ENCODE measurements at regions of chr1 and their contacts with region 1.

Region 1: DNA sequence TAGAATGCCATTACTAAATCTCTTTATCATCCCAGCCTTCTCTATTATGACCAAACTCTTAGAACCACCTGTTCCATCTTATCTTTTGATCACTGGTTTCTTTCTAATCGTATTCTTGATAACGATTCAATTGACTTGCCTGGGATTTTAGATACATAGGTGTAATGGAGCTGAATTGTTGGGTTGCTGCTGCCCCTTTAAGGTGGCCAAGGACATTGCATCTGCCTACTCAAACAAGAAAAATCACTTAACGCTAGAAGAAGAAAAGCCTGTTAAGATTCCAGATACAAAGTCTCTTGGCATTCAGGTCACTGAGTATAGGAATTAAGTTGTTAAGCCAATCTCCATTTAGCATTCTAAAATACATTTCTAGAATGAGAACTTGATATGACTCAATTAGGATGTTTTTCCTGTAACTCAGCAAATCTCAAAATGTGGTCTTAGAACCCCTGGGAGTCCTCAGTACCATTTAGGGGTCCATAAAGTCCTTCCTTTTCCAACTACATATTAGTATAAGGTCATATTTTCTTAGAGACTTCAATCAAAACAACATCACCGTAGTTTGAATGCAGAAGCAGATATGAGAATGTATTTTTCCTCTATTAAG is 12.4 kb downstream of the NEXN start:
- DNase-seq: peak in 1 of 2 experiments; percentile 21
- H3K4me3 ChIP-seq: no peak overlapping the region
- H3K27ac ChIP-seq: no peak overlapping the region
- H3K4me1 ChIP-seq: no peaks in the 10 kb centered on the region
- H3K27me3 ChIP-seq: no peaks in the 10 kb centered on the region
- CTCF ChIP-seq: peak in 2 of 3 experiments; percentile 69 to 74; a peak in 3 of 4 replicates
- EP300 ChIP-seq: no peak
- POLR2A ChIP-seq: no peak
- RAD21 ChIP-seq: peak; percentile 87 to 91

Region 2: DNA sequence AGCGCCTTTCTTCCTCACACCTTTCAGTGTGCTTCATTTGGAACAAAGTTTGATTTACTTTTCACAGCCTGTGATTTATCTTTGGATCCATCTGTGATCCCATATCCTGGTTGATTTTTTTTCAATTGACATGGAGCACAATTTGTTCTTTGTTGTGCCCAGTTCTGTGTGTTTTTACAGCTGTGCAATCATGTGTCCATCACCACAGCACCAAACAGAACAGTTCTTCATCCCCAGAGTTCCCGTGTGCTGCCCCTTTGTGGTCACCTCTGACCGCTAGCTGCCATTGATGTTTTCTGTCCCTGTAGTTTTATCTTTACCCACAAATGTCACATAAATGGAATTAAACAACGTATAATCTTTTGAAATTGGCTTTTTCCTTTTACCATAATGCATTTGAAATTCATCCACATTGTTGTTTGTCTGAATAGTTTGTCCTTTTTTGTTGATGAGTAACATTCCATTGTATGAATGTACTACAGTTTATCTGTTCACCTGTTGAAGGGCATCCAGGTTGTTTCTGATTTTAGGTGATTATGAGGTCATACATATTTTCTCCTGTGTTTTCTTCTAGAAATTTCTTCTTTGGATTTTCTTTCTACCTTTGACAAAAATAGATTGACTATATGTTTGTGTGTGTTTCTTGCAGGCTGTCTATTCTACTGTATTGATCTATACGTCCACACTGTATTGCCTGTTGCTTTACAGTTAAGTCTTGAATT is 103.9 kb before region 1 on chr1:
- CTCF ChIA-PET with region 1: no interaction called
- POLR2A ChIA-PET with region 1: no interaction called
- DNase-seq: no peak
- H3K4me3 ChIP-seq: no peak overlapping the region
- H3K27ac ChIP-seq: no peak overlapping the region
- H3K4me1 ChIP-seq: no peaks in the 10 kb centered on the region
- H3K27me3 ChIP-seq: no peaks in the 10 kb centered on the region
- CTCF ChIP-seq: peak in 2 of 3 experiments; percentile 13 to 21; a peak in 2 of 4 replicates
- EP300 ChIP-seq: no peak
- POLR2A ChIP-seq: no peak
- RAD21 ChIP-seq: no peak; a peak in 1 of 4 replicates

Region 3: DNA sequence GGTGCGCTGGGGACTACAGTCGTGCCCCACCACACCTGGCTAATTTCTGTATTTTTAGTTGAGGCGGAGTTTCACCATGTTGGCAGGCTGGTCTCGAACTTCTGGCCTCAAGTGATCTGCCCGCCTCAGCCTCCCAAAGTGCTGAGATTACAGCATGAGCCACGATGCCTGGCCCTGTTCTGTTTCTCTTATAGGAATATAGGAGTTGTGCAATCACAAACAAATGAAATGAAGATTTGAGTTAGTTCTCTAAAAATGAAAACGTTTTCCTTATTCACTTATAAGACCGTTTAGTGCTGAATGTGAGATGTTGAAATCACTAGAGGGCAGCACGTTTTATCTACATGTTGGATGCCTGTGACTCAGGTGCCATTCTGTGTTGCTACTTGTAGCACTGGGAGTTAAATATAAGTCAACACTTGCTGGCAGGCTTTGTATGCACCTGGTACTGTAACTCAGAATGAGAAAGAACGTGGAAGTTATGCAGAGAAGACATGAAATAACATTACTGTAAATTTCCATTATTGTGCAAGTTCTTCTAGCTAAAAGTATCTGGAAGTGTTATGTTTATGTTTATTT is 75.6 kb before region 1 on chr1:
- CTCF ChIA-PET with region 1: interaction called, 14 read pairs
- POLR2A ChIA-PET with region 1: interaction called, 3 read pairs
- DNase-seq: no peak
- H3K4me3 ChIP-seq: no peak overlapping the region
- H3K27ac ChIP-seq: no peak overlapping the region
- H3K4me1 ChIP-seq: no peaks in the 10 kb centered on the region
- H3K27me3 ChIP-seq: peaks cover 0 to 1% (median 0%) of the 10 kb centered on the region in 4 experiments; a peak in 1 of 7 replicates
- CTCF ChIP-seq: peak in 2 of 3 experiments; percentile 26 to 46; a peak in 2 of 4 replicates
- EP300 ChIP-seq: no peak
- POLR2A ChIP-seq: no peak
- RAD21 ChIP-seq: peak; percentile 45 to 55

Measured in H1 (cell line).